WTC11 (cell line): ENCODE measurements at regions of chr17 and their contacts with region 1.

Region 1: DNA sequence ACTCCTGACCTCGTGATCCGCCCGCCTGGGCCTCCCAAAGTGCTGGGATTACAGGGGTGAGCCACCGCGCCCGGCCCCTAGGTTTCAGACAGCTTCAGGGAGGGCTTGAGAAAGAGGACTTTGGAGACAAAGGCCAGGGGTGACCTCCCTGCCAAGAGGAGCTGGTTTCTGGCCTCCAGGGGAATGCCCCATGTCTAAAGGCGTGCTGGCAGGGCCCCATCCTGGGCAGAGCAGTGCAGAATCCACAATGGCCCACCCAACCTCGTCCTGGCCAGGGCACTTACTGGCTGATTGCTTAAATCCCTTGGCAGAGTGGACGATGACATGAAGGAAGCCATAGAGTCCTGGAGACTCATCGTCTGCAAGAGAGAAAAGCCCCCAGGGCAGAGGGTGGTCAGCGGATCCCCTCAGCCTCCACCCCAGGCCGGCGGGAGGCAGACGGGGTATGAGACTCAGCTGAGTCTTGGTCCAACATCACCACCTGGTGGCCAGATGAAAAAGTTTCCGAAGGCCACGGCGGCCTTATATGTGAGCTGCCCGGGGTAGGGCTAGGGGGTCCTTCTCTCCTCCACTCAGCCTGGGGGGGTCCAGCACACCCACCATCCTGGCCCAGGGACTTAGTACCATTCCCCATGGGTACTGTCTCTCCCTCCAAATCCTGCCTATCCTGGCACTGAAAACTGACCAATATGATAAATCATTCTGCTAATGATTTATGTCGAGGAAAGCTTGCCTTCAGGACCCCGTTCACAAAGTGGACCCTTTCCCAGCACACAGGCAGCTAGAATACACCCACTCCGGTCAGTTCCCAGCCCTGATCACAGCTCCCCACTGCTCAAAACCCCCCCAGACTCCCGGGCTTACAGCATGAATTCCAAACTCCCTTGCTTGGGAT is 59.1 kb downstream of the TIMM22 start:
- DNase-seq: peak; percentile 84
- ATAC-seq: peak; percentile 91
- H3K4me3 Mint-ChIP-seq: no peak overlapping the region
- H3K27ac Mint-ChIP-seq: no peak overlapping the region
- H3K4me1 Mint-ChIP-seq: no peaks in the 10 kb centered on the region
- H3K27me3 Mint-ChIP-seq: no peaks in the 10 kb centered on the region
- CTCF ChIP-seq: peak; percentile 73

Region 2: GRCh38 chr17:409848-410545 is 646.0 kb before region 1 on chr17:
- CTCF ChIA-PET with region 1: interaction called, 10 read pairs
- POLR2A ChIA-PET with region 1: no interaction called
- DNase-seq: peak; percentile 100
- ATAC-seq: peak; percentile 78
- H3K4me3 Mint-ChIP-seq: peak overlapping the region; percentile 81
- H3K27ac Mint-ChIP-seq: peak overlapping the region; percentile 55
- H3K4me1 Mint-ChIP-seq: peaks cover 19% of the 10 kb centered on the region
- H3K27me3 Mint-ChIP-seq: peaks cover 20% of the 10 kb centered on the region
- CTCF ChIP-seq: no peak

Region 3: DNA sequence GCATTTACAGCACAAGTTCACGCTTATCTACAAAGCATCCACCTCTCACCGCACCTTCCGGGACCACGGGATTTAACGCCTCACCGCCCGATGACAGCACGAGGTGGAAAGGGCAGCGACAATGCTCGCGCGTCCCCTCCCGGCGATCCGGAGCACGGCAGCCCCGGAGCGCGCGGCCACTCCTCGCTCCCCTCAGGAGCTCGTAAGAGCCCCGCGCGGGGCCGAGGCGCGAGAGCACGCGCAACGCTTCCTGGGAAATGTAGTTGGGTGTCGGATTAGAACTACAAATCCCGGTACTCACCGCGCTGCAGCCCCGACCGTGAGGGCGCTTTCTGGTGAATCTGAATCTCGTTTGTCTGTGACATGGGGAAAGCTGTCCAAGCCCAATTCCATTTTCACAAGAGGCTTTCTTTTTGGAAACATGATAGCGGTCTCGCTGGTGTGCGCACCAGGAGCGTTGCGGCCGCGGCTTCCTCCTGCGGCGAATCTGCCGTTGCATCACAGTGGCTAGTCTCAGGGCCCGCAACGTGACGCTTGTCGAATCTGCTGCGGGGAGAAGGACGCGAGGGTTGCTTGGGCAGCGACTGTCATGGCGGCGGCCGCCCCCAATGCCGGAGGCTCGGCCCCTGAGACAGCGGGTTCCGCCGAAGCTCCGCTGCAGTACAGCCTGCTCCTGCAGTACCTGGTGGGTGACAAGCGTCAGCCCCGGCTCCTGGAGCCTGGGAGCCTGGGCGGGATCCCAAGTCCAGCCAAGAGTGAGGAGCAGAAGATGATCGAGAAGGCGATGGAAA is 59.2 kb before region 1 on chr17 and contains the start of gene TIMM22:
- CTCF ChIA-PET with region 1: interaction called, 56 read pairs
- POLR2A ChIA-PET with region 1: no interaction called
- DNase-seq: peak; percentile 96
- ATAC-seq: peak; percentile 97
- H3K4me3 Mint-ChIP-seq: peak within 1 kb of the TSS; percentile 90
- H3K27ac Mint-ChIP-seq: peak within 1 kb of the TSS; percentile 99
- H3K4me1 Mint-ChIP-seq: peaks cover 8% of the 10 kb centered on the region
- H3K27me3 Mint-ChIP-seq: peaks cover 19% of the 10 kb centered on the region
- CTCF ChIP-seq: peak; percentile 79
- total RNA-seq, gene TIMM22: 17.2 to 18.0 TPM (median 17.4 TPM) in 3 replicates

Region 4: DNA sequence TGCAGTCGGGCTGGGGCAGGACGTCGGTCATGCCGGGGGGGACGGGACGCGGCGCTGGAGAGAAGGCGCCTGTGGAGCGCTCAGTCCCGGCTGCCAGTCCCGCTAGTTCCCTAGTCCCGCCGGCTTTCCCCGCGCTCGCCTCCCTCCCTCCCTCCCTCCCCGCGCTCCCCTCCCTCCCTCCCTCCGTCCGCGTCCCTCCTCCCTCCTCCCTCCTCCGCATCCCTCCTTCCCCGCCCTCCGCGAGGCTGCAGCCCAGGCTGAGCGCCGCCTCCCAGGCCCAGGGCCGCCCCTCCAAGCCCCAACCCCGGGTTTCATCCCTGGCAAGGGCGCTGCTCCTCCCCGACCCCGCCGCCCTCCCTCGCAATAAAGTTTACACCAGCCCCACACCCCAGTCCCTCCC is 24.3 kb before region 1 on chr17:
- CTCF ChIA-PET with region 1: interaction called, 35 read pairs
- POLR2A ChIA-PET with region 1: no interaction called
- DNase-seq: peak; percentile 71
- ATAC-seq: peak; percentile 77
- H3K4me3 Mint-ChIP-seq: no peak overlapping the region
- H3K27ac Mint-ChIP-seq: no peak overlapping the region
- H3K4me1 Mint-ChIP-seq: peaks cover 5% of the 10 kb centered on the region; the same call in 1 of the 2 replicates
- H3K27me3 Mint-ChIP-seq: peaks cover 18% of the 10 kb centered on the region
- CTCF ChIP-seq: no peak

Region 5: GRCh38 chr17:1087381-1088241 is 31.6 kb after region 1 on chr17:
- CTCF ChIA-PET with region 1: interaction called, 10 read pairs
- POLR2A ChIA-PET with region 1: no interaction called
- DNase-seq: peak; percentile 76
- ATAC-seq: peak; percentile 95
- H3K4me3 Mint-ChIP-seq: no peak overlapping the region
- H3K27ac Mint-ChIP-seq: no peak overlapping the region
- H3K4me1 Mint-ChIP-seq: peaks cover 9% of the 10 kb centered on the region
- H3K27me3 Mint-ChIP-seq: no peaks in the 10 kb centered on the region; the same call in 1 of the 2 replicates
- CTCF ChIP-seq: no peak

Region 6: GRCh38 chr17:1147661-1148060 is 91.7 kb after region 1 on chr17:
- CTCF ChIA-PET with region 1: interaction called, 42 read pairs
- POLR2A ChIA-PET with region 1: no interaction called
- DNase-seq: peak; percentile 83
- ATAC-seq: peak; percentile 91
- H3K4me3 Mint-ChIP-seq: no peak overlapping the region
- H3K27ac Mint-ChIP-seq: no peak overlapping the region; the same call in 1 of the 2 replicates
- H3K4me1 Mint-ChIP-seq: peaks cover 2% of the 10 kb centered on the region; the same call in 1 of the 2 replicates
- H3K27me3 Mint-ChIP-seq: no peaks in the 10 kb centered on the region
- CTCF ChIP-seq: 0 out of 2 replicates have a peak, but pooled peaks have one; percentile 27